ENCODE measurements at regions of chr16 and their contacts with region 1.

Region 1: DNA sequence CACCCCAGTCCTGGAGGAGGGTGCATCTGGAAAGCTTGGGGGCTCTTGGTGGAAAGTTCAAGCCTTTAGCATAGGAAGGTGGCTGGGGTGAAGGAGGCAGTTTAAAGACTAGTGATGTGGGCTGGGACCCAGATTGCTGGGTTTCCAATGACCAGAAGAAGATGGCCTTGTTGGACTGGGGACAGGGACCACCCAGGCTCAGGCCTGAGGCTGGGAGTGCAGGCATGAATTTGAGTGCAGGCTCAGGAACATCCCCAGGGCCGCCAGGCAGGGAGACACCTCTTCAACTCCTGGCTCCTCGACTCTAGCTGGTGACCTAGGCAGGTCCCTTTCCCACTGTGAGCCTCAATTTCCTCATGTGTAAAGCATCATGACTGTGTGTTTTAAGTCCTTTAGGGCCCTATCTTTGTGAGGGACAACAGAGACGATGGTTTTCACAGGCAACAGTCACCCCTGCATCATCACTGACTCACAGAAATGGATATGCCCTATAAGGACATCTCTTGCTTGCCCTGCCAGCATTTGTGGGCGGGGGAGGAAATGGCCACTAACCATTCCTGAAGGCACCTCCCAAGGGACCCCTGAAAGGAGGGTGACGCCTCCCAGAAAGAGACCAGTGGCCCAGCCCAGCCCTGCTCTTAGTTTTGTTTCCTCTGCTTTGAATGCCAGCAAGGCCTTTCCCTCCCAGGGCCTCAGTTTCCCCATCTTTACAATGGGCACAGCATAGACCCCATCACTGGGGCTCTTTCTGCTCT is 11.1 kb downstream of the NLRC5 start:
- DNase-seq: peak; percentile 87
- ATAC-seq: peak; percentile 80
- H3K4me3 ChIP-seq: peak overlapping the region; percentile 20; the same call in 1 of the 2 replicates
- H3K27ac ChIP-seq: peak overlapping the region; percentile 93
- H3K4me1 ChIP-seq: peaks cover 52% of the 10 kb centered on the region
- H3K27me3 ChIP-seq: no peaks in the 10 kb centered on the region
- CTCF ChIP-seq: no peak
- EP300 ChIP-seq: no peak
- POLR2A ChIP-seq: no peak; the same call in 1 of the 2 replicates
- RAD21 ChIP-seq: no peak

Region 2: DNA sequence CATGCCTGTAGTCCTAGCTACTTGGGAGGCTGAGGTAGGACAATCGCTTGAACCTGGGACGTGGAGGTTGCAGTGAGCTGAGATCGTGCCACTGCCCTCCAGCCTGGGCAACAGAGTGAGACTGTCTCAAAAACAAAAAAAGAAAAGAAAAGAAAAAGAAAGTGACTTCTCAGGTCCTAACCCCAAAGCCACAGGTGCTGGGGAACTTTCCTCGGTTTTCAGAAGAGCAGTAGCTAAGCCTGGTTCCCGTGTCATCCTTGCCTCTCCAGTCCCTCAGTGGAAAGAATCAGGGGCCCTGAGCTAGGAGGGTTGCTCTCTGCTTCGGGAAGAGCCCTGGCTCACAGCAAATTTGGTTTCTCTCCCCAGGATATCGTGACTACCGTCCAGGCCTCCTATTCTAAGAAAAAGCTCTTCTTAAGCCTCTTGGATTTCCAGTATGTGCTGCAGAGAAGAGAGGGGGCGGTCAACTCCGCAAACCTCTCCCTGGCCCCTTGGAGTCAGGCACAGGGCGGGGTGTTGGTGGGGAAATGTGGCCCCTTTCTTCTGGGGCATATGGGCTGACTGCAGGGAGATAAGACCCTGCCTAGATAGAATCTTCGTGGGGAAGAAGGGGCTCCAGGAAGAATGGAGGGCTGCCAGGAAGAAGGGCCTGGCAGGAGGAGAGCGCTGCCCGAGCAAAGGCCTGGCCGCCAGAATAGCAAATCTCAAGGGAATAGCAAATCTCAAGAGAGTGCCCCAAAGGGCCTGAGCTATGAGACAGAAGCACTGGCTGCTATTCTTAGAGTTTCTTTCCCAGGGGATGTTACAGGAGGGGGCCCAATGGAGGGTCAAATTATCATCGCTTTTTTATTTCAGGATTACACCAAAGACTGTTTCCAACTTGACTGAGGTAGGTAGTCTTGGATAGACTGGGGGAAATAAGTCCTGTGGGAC is 19.4 kb before region 1 on chr16:
- CTCF ChIA-PET with region 1: interaction called, 15 read pairs
- POLR2A ChIA-PET with region 1: interaction called, 216 read pairs
- RAD21 ChIA-PET with region 1: interaction called, 473 read pairs
- SMC1A ChIA-PET with region 1: interaction called, 604 read pairs
- in situ Hi-C with region 1: no loop called
- intact Hi-C with region 1: no loop called
- DNase-seq: no peak
- ATAC-seq: peak; percentile 67
- H3K4me3 ChIP-seq: no peak overlapping the region
- H3K27ac ChIP-seq: peak overlapping the region; percentile 41
- H3K4me1 ChIP-seq: peaks cover 48% of the 10 kb centered on the region
- H3K27me3 ChIP-seq: no peaks in the 10 kb centered on the region
- CTCF ChIP-seq: no peak
- EP300 ChIP-seq: no peak
- POLR2A ChIP-seq: no peak
- RAD21 ChIP-seq: no peak

Region 3: GRCh38 chr16:56988948-56989945 is 11.2 kb before region 1 on chr16 and contains the start of gene NLRC5:
- CTCF ChIA-PET with region 1: interaction called, 13 read pairs
- POLR2A ChIA-PET with region 1: interaction called, 216 read pairs
- RAD21 ChIA-PET with region 1: interaction called, 473 read pairs
- SMC1A ChIA-PET with region 1: interaction called, 604 read pairs
- in situ Hi-C with region 1: no loop called
- intact Hi-C with region 1: loop called (anchors 1 kb)
- DNase-seq: no peak
- ATAC-seq: peak; percentile 83
- H3K4me3 ChIP-seq: peak within 1 kb of the TSS; percentile 79
- H3K27ac ChIP-seq: peak within 1 kb of the TSS; percentile 88
- H3K4me1 ChIP-seq: peaks cover 32% of the 10 kb centered on the region
- H3K27me3 ChIP-seq: no peaks in the 10 kb centered on the region
- CTCF ChIP-seq: no peak
- EP300 ChIP-seq: no peak
- POLR2A ChIP-seq: peak; percentile 87
- RAD21 ChIP-seq: no peak
- polyA plus RNA-seq, gene NLRC5: 13.1 to 14.2 TPM

Measured in GM12878 (cell line).